OCI-LY7 (cell line): ENCODE measurements at regions of chr21 and their contacts with region 1.

Region 1: GRCh38 chr21:42145569-42146272 is 73.2 kb upstream of the ABCG1 start:
- DNase-seq: peak; percentile 79
- H3K4me3 ChIP-seq: no peak overlapping the region
- H3K27ac ChIP-seq: no peak overlapping the region
- H3K4me1 ChIP-seq: peaks cover 16% of the 10 kb centered on the region
- CTCF ChIP-seq: peak; percentile 97

Region 2: GRCh38 chr21:42164064-42164789 is 18.5 kb after region 1 on chr21:
- CTCF ChIA-PET with region 1: no interaction called
- POLR2A ChIA-PET with region 1: no interaction called
- intact Hi-C with region 1: no loop called
- DNase-seq: peak; percentile 87
- H3K4me3 ChIP-seq: no peak overlapping the region
- H3K27ac ChIP-seq: peak overlapping the region; percentile 41
- H3K4me1 ChIP-seq: peaks cover 29% of the 10 kb centered on the region
- CTCF ChIP-seq: peak; percentile 99

Region 3: DNA sequence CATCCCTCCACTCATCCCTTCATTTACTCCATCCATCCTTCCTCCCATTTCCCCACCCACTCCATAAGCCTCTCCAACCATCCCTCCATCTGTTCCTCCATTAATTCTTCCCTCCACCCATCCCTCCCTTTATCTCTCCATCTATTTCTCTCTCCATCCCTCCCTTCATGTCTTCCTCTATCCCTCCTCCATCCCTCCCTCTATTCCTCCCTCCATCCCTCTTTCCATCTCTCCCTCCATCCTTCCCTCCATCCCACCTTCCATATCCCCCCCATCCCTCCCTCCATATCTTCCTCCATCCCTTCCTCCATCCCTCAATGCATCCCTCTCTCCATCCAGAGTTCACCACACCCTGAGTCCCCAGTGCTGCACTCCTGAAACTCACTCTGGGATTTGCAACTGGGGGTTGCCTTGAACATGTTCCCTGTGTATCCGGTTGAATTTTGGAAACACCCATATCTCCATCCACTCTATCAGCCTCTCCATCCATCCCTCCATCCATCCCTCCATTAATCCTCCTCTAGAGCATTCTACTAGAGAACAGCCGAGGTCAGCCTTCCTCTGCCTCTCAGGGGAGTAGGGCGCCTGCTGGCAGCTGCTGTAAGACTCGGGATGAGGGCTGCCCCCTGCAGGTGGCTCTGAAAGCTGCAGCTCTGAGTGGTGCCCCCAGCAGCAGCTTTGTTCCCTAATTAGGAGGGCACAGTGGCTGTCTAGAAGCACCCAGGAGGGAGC is 112.6 kb after region 1 on chr21:
- CTCF ChIA-PET with region 1: interaction called, 5 read pairs
- POLR2A ChIA-PET with region 1: interaction called, 6 read pairs
- intact Hi-C with region 1: loop called (anchors 1 kb)
- DNase-seq: peak; percentile 87
- H3K4me3 ChIP-seq: no peak overlapping the region
- H3K27ac ChIP-seq: no peak overlapping the region
- H3K4me1 ChIP-seq: peaks cover 48% of the 10 kb centered on the region
- CTCF ChIP-seq: peak; percentile 99

Region 4: GRCh38 chr21:42309753-42310221 is 164.1 kb after region 1 on chr21:
- CTCF ChIA-PET with region 1: no interaction called
- POLR2A ChIA-PET with region 1: no interaction called
- intact Hi-C with region 1: loop called (anchors 5 kb)
- DNase-seq: peak; percentile 73
- H3K4me3 ChIP-seq: no peak overlapping the region
- H3K27ac ChIP-seq: no peak overlapping the region
- H3K4me1 ChIP-seq: peaks cover 15% of the 10 kb centered on the region
- CTCF ChIP-seq: peak; percentile 91

Region 5: DNA sequence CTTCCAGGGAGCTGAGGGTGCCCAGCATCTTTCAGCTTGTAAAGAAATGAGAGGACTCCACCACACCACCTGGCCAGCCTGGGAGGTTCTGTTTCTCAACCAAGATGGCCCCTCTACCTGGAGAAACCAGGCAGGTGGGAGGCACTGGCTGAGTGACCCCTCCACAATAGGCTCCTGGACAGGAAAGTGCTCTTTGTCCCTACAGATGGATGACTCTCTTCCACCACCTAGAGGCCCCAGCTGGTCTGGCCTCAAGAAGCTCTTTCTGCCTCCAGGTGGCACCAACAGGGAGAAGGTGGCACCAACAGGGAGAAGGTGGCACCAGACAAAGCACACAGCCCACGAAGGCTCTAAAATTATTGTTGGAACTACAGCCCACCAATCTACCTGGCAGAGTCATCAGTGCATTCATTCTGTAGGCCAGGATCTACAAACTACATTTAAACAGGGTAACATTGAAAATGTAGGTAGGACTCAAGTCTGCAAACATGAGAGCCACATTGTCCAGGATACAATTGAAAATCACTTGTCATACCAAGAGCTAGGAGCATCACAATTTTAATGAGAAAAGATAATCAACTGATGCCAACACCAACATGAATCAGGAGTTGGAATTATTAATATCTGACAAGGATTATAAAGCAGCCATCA is 235.7 kb after region 1 on chr21:
- CTCF ChIA-PET with region 1: no interaction called
- POLR2A ChIA-PET with region 1: no interaction called
- intact Hi-C with region 1: loop called (anchors 1 kb)
- DNase-seq: peak; percentile 64
- H3K4me3 ChIP-seq: no peak overlapping the region
- H3K27ac ChIP-seq: no peak overlapping the region
- H3K4me1 ChIP-seq: peaks cover 12% of the 10 kb centered on the region
- CTCF ChIP-seq: peak; percentile 89

Region 6: DNA sequence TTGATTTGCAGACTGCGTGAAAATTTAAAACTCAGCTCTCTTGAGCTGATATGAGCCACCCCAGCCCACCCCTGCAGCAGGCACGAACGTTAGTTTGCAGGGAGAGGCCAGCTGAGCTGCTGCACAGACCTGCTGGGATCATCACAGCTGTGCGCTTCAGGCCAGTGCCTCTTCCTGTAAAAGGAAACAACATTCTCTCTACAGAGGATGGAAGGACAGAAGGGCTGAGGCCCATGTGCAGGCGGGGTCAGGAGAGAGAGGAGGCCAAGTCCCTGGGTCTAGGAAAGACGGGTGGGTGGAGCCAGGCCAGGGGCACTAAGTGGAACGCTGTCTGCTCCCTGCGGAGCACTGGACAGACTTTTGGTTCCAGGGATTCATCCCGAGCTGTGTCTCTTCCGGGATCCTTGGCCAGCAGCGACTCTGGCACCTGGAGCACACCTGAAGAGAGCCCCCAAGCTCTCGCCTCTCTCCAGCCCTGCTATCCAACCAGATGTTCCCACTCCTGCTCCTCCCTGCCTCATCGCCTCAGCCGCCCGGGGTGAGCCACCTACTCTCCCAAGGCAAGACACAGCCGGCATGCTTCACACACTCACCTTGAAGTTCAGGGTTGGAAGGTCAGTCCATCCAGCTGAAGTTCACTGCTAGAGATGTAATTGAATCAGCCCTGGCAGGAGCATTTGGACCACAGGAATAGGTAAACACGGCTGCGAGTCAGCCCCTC is 307.9 kb after region 1 on chr21:
- CTCF ChIA-PET with region 1: no interaction called
- POLR2A ChIA-PET with region 1: no interaction called
- intact Hi-C with region 1: loop called (anchors 2 kb)
- DNase-seq: no peak
- H3K4me3 ChIP-seq: no peak overlapping the region
- H3K27ac ChIP-seq: no peak overlapping the region
- H3K4me1 ChIP-seq: peaks cover 29% of the 10 kb centered on the region
- CTCF ChIP-seq: no peak